AG04450 (cell line): ENCODE measurements at regions of chr4 and their contacts with region 1.

Region 1: GRCh38 chr4:98293104-98293887 is 32.1 kb downstream of the RAP1GDS1 start:
- DNase-seq: no peak
- H3K4me3 ChIP-seq: no peak overlapping the region
- H3K27ac ChIP-seq: peak overlapping the region; percentile 40
- H3K27me3 ChIP-seq: no peaks in the 10 kb centered on the region
- CTCF ChIP-seq: no peak

Region 2: GRCh38 chr4:98430708-98431403 is 137.6 kb after region 1 on chr4:
- CTCF ChIA-PET with region 1: no interaction called
- POLR2A ChIA-PET with region 1: no interaction called
- DNase-seq: peak; percentile 86
- H3K4me3 ChIP-seq: no peak overlapping the region
- H3K27ac ChIP-seq: peak overlapping the region; percentile 57
- H3K27me3 ChIP-seq: no peaks in the 10 kb centered on the region
- CTCF ChIP-seq: no peak

Region 3: DNA sequence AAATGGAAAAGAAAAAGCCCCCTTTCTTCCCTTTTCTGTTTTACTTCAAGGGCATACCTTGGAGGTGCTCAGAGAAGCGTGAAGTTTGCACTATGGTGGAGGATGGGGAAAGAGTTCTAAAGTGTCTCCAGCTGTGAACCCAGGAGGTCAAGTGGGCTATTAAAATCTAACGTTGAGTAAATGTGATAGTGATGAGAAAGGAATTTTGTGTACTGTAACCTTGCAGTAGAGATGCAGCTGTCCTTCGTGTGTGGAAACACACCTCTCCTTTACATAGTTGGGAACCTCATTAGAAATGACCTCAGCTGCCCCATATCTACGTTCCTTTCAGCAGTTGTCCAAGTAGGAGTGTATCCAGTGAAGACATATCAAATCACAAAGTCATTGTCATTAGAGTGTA is 768.8 kb after region 1 on chr4:
- CTCF ChIA-PET with region 1: no interaction called
- POLR2A ChIA-PET with region 1: interaction called, 10 read pairs
- DNase-seq: no peak
- H3K4me3 ChIP-seq: no peak overlapping the region
- H3K27ac ChIP-seq: no peak overlapping the region
- H3K27me3 ChIP-seq: no peaks in the 10 kb centered on the region
- CTCF ChIP-seq: no peak